ENCODE measurements at regions of chr9 and their contacts with region 1.

Region 1: GRCh38 chr9:10059044-10059443 is 553.8 kb downstream of the PTPRD start:
- DNase-seq: no peak
- H3K4me3 ChIP-seq: no peak overlapping the region
- H3K27ac ChIP-seq: no peak overlapping the region
- H3K4me1 ChIP-seq: no peaks in the 10 kb centered on the region
- CTCF ChIP-seq: no peak

Region 2: DNA sequence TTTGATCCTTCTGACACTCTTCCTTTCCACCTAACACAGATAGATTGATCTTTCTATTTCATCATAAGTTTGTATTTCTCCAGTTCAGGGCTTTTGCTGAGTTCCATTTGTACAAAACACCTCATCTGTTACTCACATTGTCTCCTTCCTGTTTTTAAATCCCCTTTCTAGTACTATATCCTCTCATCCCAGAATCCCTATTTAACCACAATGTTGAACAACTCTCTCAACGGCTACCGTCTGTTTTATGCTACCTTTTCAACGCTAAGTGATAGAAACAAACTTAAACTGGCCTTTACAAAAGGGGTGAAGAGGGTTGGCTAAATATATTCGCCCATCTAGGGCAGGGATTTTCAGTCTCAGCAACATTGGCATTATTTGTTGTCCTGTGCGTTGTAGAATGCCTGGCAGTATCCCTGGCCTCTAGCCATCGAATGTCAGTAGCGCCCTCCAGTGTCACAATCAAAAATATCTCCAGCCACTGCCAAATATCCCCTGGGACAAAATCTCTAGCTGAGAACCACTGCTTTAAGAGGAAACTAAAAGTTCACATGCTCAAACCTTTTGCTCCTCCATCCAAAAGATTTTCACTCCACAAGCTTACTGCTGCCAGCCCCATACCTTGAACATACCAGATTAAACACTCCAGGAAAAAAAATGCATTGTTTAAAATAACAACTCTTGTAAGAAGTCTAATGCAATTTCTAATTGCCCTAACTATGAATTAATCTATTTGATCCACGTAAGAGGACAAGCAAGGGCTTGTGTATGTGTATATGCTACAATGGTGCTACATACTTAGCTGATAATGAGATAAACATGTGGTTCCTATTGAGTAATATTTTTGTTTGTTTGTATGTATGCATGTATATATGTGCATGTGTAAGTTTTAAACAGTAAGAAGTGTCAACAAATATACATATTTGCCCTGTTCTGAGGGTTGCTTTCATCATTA is 209.8 kb after region 1 on chr9:
- CTCF ChIA-PET with region 1: no interaction called
- POLR2A ChIA-PET with region 1: interaction called, 3 read pairs
- intact Hi-C with region 1: loop called (anchors 1 kb)
- DNase-seq: peak; percentile 50
- H3K4me3 ChIP-seq: no peak overlapping the region
- H3K27ac ChIP-seq: no peak overlapping the region
- H3K4me1 ChIP-seq: no peaks in the 10 kb centered on the region
- CTCF ChIP-seq: peak; percentile 80